ENCODE measurements at regions of chr2 and their contacts with region 1.

Region 1: GRCh38 chr2:236512902-236513435 is 56.7 kb upstream of the ACKR3 start:
- DNase-seq: no peak
- H3K4me3 ChIP-seq: no peak overlapping the region
- H3K27ac ChIP-seq: no peak overlapping the region
- H3K27me3 ChIP-seq: peaks cover 3% of the 10 kb centered on the region
- CTCF ChIP-seq: peak; percentile 73

Region 2: DNA sequence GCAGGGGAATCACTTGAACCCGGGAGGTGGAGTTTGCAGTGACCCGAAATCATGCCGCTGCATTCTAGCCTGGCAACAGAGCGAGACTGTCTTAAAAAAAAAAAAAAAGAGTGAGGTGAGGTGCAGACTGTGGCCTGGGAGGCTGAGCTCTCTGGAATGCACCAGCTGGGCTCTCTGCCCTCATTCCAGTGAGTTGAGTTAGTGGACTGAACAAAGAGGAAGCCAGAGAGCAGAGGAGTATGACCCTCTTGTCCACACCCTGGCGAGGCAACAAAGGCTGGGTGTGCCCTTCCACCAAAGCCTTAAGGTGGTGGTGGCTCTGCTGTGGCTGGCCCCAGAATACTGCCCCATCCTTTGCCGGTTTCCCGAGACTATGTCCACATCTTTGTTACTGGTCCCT is 14.6 kb before region 1 on chr2:
- CTCF ChIA-PET with region 1: interaction called, 10 read pairs
- POLR2A ChIA-PET with region 1: no interaction called
- DNase-seq: no peak
- H3K4me3 ChIP-seq: no peak overlapping the region
- H3K27ac ChIP-seq: no peak overlapping the region
- H3K27me3 ChIP-seq: no peaks in the 10 kb centered on the region
- CTCF ChIP-seq: no peak

Region 3: DNA sequence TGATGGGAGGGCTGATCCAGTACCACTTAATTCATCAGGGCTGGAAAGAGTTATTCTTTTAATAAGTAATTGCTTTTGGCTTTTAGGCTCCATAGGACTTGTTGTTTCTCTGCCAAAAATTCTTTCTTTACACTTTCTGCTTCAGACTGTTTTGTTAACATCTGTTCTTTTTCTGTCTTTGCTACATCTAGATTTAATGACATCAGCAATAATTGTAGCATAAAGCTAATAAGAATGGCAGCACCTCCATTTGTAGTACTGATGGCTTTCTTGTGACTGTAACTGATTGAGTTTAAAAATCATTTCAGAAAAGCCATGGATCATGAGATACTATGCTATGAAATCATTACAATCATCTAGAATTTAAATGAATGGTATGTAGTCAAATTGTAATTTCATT is 10.3 kb after region 1 on chr2:
- CTCF ChIA-PET with region 1: interaction called, 11 read pairs
- POLR2A ChIA-PET with region 1: no interaction called
- DNase-seq: no peak
- H3K4me3 ChIP-seq: no peak overlapping the region
- H3K27ac ChIP-seq: no peak overlapping the region
- H3K27me3 ChIP-seq: no peaks in the 10 kb centered on the region
- CTCF ChIP-seq: no peak

Region 4: DNA sequence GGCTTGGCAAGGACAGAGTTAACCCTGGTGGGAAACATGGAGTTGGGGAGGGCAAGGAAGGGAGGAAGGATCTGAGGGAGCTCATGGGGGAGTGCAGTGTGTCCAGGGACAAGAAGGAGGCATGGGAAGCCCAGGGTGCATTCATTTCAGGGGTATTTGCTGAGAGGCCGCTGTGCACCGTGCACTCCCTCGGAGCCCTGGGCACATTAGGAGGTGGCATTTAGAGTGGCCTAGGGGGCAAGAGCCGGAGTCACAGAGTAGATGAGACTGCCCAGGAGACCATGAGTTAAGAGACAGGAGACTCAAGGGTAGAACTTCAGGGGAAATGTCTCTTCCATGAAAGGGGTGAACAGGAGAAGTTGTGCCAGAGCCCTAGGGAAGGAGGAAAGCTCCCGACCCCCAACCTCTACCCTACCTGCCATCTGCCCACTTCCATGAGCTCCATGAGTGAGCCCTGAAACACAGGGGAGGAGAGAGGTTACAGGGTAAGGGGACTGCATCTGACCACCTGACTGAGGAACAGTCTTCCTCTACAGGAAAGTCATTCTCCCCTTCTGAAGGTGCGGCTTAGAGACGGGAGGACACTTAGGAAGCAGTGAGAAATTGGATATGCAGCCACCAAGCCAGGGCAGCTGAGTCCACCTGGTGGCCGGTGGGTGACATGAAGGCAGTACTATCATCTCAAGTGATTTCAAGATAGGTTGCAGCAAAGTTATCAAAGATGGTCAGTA is 514.2 kb after region 1 on chr2:
- CTCF ChIA-PET with region 1: interaction called, 25 read pairs
- POLR2A ChIA-PET with region 1: no interaction called
- DNase-seq: peak; percentile 16
- H3K4me3 ChIP-seq: no peak overlapping the region
- H3K27ac ChIP-seq: no peak overlapping the region
- H3K27me3 ChIP-seq: no peaks in the 10 kb centered on the region
- CTCF ChIP-seq: peak; percentile 76

Measured in AG04450 (cell line).